Calu3 (cell line): ENCODE measurements at regions of chr6 and their contacts with region 1.

Region 1: DNA sequence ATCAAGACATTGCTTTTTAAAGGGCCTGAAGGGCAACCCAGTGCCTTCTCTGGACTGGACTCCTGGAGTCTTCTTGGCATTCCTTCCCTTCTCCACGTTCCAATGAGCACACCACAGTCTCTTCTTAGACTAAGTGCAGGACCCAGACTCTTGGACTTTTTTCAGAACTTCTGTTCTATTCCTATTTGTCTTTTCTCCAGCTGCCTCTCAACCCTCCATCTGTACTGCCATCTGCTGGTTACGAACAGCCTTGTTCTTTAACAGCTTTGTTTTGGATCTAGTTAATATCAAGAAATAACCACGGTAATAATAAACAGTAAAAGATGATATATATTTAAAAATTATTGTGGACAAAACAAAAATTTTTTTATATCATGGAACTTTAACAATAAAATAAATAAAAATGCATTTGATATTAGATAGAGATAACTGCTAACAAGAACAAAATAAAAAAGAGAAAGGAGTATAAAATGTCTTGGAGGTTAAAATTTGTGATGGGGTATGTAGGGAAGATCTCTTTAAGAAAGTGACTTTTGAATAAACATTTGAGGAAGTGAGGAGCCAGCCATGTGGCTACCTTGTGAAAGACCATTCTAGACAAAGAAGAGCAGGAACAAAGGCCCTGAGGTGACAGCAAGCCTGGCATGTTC is 105.1 kb upstream of the HCRTR2 start:
- DNase-seq: peak; percentile 52
- H3K4me3 Mint-ChIP-seq: no peak overlapping the region
- H3K27ac Mint-ChIP-seq: no peak overlapping the region
- H3K4me1 Mint-ChIP-seq: no peaks in the 10 kb centered on the region
- H3K27me3 Mint-ChIP-seq: no peaks in the 10 kb centered on the region
- CTCF ChIP-seq: peak; percentile 54

Region 2: GRCh38 chr6:54860739-54861138 is 208.5 kb before region 1 on chr6:
- CTCF ChIA-PET with region 1: no interaction called
- intact Hi-C with region 1: loop called (anchors 5 kb)
- DNase-seq: peak; percentile 69
- H3K4me3 Mint-ChIP-seq: peak overlapping the region; percentile 64
- H3K27ac Mint-ChIP-seq: peak overlapping the region; percentile 98
- H3K4me1 Mint-ChIP-seq: peaks cover 74% of the 10 kb centered on the region
- H3K27me3 Mint-ChIP-seq: no peaks in the 10 kb centered on the region
- CTCF ChIP-seq: no peak

Region 3: DNA sequence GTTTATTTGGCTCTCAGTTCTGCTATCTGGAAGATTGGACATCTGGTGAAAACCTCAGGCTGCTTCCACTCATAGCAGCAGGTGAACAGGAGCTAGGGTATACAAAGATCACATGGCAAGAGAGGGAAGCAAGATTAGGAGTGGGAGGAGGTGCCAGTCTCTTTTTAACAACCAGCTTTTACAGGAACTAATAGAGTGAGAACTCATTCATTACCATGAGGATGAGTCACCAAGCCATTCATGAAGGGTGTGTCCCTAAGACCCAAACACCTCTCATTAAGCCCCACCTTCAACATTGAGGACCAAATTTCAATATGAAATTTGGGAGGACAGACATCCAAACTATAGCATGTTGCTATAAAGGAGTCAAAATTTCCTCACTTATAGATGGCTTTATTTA is 19.6 kb after region 1 on chr6:
- CTCF ChIA-PET with region 1: no interaction called
- intact Hi-C with region 1: no loop called
- DNase-seq: no peak
- H3K4me3 Mint-ChIP-seq: no peak overlapping the region
- H3K27ac Mint-ChIP-seq: no peak overlapping the region
- H3K4me1 Mint-ChIP-seq: peaks cover 8% of the 10 kb centered on the region
- H3K27me3 Mint-ChIP-seq: peaks cover 32% of the 10 kb centered on the region
- CTCF ChIP-seq: no peak

Region 4: DNA sequence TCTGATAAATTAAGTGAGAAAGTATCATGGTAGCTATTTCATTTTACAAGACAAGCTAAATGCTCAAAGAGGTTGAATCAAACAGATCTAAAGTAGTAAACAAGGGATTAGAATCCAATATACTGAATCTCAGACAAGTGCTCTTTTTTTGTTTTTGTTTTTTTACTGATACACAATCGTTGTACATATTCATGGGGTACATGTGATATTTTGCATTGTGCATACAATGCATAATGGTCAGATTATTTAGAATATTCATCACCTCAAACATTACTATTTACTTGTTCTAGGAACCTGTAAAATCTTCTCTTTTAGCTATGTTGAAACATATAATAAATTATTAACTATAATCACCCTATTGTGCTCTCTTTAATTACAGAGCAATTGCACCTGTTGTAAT is 48.0 kb after region 1 on chr6:
- CTCF ChIA-PET with region 1: no interaction called
- intact Hi-C with region 1: no loop called
- DNase-seq: no peak
- H3K4me3 Mint-ChIP-seq: no peak overlapping the region
- H3K27ac Mint-ChIP-seq: no peak overlapping the region
- H3K4me1 Mint-ChIP-seq: no peaks in the 10 kb centered on the region
- H3K27me3 Mint-ChIP-seq: no peaks in the 10 kb centered on the region
- CTCF ChIP-seq: no peak

Region 5: DNA sequence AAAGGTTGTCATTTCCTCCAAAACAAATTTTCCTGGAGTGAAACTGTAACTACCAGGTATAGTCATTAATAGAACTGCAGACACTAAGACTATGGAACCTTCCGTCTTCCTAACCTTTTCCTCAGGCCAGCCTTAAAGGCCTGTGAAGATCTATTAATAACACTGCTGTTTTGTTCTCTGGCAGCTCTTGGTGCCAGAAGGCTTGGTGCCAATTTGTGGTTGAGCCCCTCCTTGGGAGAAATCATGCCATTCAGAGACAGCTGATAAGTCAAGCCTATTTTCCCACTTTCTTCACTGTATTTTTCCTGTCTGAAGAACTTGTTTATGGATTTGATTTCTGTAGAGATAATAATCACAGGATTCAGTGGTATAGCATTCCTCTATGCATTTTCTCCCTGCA is 169.8 kb after region 1 on chr6:
- CTCF ChIA-PET with region 1: no interaction called
- intact Hi-C with region 1: loop called (anchors 5 kb)
- DNase-seq: peak; percentile 50
- H3K4me3 Mint-ChIP-seq: no peak overlapping the region
- H3K27ac Mint-ChIP-seq: no peak overlapping the region
- H3K4me1 Mint-ChIP-seq: peaks cover 23% of the 10 kb centered on the region
- H3K27me3 Mint-ChIP-seq: no peaks in the 10 kb centered on the region
- CTCF ChIP-seq: no peak